Right cardiac atrium (tissue), 5 donors: ENCODE measurements at regions of chr1 and their contacts with region 1.

Region 1: GRCh38 chr1:7207875-7208646 is 422.8 kb downstream of the CAMTA1 start:
- DNase-seq: no peak
- ATAC-seq: peak; percentile 52 to 74
- H3K4me3 ChIP-seq: no peak overlapping the region
- H3K27ac ChIP-seq: no peak overlapping the region
- H3K4me1 ChIP-seq: no peaks in the 10 kb centered on the region
- H3K27me3 ChIP-seq: no peaks in the 10 kb centered on the region

Region 2: DNA sequence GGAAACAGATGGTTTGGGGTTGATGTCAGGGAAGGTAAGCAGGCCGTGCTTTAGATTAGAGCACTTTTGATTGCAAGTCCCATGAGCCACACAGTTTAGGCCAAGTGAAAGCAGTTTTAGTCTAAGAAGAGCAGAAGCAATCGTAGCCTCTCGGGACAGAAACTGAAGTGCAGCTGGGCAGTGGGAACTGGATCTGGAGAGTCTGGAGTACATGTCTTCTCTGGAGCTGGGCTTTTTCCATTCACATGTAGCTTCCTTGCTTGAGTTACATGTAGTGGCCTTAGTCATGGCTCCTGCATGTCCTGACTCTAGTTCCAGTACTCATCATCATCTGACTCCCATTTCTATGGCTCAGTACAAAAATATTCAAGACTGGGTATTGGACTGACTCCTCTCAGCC is 406.1 kb before region 1 on chr1:
- intact Hi-C with region 1: loop called in 2 of 4 experiments (anchors 5 to 10 kb)
- DNase-seq: no peak
- ATAC-seq: peak; percentile 30 to 45
- H3K4me3 ChIP-seq: no peak overlapping the region
- H3K27ac ChIP-seq: peak overlapping the region; percentile 92
- H3K4me1 ChIP-seq: peaks cover 16% of the 10 kb centered on the region
- H3K27me3 ChIP-seq: no peaks in the 10 kb centered on the region

Region 3: GRCh38 chr1:7042322-7043190 is 165.5 kb before region 1 on chr1:
- intact Hi-C with region 1: loop called in 3 of 4 experiments (anchors 5 to 10 kb)
- DNase-seq: no peak
- ATAC-seq: no peak
- H3K4me3 ChIP-seq: no peak overlapping the region
- H3K27ac ChIP-seq: no peak overlapping the region
- H3K4me1 ChIP-seq: no peaks in the 10 kb centered on the region
- H3K27me3 ChIP-seq: no peaks in the 10 kb centered on the region